ENCODE measurements at regions of chr6 and their contacts with region 1.

Region 1: DNA sequence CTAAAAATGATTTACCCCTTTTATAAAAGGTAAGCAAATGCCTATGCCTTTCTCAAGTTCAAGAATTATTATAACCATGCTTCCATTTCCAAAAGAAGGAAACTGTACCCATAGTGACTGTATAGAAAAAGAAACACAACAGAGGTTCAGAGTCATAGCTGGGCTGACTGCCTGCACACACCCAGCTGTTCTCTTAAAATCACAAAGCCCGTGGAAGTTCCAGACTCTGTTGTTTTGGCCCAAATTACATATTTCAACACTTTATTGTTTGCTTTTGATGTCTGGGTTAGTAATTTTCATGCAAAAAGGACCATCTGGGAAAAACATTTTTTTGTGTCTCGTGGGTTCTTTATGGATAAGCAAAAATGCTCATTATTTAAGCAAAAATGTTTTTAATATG is 99.2 kb downstream of the LCA5 start:
- DNase-seq: no peak
- CTCF ChIP-seq: no peak

Region 2: GRCh38 chr6:79373880-79374279 is 64.2 kb before region 1 on chr6:
- CTCF ChIA-PET with region 1: no interaction called
- POLR2A ChIA-PET with region 1: no interaction called
- DNase-seq: no peak
- CTCF ChIP-seq: no peak

Region 3: DNA sequence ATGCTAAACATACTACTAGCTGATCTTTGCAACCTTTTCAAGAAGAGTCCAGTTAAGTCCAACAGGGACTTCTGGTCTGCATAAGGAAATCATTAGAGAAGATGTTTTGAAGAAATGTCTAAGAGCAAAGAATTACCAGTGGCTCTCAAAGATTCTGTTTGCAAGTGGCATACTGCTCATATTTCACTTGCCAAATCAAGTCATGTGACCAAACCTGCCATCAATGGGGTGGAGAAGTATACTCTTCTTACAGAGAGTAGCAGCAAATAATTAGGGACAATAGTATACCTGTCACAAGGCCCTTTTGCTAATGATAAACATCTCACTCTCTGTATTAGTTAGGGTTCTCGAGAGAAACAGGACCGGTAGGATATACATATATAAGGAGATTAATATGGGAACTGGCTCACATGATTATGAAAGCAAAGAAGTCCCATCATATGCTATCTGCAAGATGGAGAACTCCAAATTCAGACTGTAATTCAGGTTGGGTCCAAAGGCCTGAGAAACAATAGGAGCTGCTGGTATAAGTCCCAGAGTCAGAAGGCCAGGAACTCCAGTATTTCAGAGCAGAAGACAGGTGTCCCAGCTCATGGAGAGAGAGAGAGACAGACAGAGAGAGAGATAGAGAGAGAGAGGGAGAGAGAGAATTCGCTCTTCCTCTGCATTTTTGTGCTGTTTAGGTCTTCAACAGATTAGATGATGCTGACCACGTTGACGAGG is 12.3 kb before region 1 on chr6:
- CTCF ChIA-PET with region 1: interaction called, 12 read pairs
- POLR2A ChIA-PET with region 1: no interaction called
- DNase-seq: no peak
- CTCF ChIP-seq: no peak

Region 4: GRCh38 chr6:79450984-79451383 is 13.0 kb after region 1 on chr6:
- CTCF ChIA-PET with region 1: interaction called, 17 read pairs
- POLR2A ChIA-PET with region 1: no interaction called
- DNase-seq: no peak
- CTCF ChIP-seq: no peak